ENCODE measurements at regions of chr13 and their contacts with region 1.

Region 1: GRCh38 chr13:69720278-69720983 is 387.2 kb upstream of the ATXN8OS start:
- DNase-seq: peak; percentile 30
- H3K4me3 ChIP-seq: no peak overlapping the region
- H3K27ac ChIP-seq: peak overlapping the region; percentile 54 to 71 (median 60)
- H3K4me1 ChIP-seq: peaks cover 0 to 10% (median 3%) of the 10 kb centered on the region in 4 donors
- H3K27me3 ChIP-seq: no peaks in the 10 kb centered on the region
- CTCF ChIP-seq: no peak
- EP300 ChIP-seq: no peak
- POLR2A ChIP-seq: no peak

Region 2: GRCh38 chr13:69980799-69981198 is 260.4 kb after region 1 on chr13:
- in situ Hi-C with region 1: no loop called
- intact Hi-C with region 1: loop called (anchors 5 kb)
- DNase-seq: no peak
- H3K4me3 ChIP-seq: no peak overlapping the region
- H3K27ac ChIP-seq: no peak overlapping the region
- H3K4me1 ChIP-seq: no peaks in the 10 kb centered on the region
- H3K27me3 ChIP-seq: no peaks in the 10 kb centered on the region
- CTCF ChIP-seq: no peak
- EP300 ChIP-seq: no peak
- POLR2A ChIP-seq: no peak

Region 3: GRCh38 chr13:70054572-70054971 is 334.1 kb after region 1 on chr13:
- in situ Hi-C with region 1: no loop called
- intact Hi-C with region 1: no loop called
- DNase-seq: no peak
- H3K4me3 ChIP-seq: no peak overlapping the region
- H3K27ac ChIP-seq: no peak overlapping the region
- H3K4me1 ChIP-seq: no peaks in the 10 kb centered on the region
- H3K27me3 ChIP-seq: no peaks in the 10 kb centered on the region
- CTCF ChIP-seq: no peak
- EP300 ChIP-seq: no peak
- POLR2A ChIP-seq: no peak